Activated CD8-positive, alpha-beta memory T cell treated with anti-CD3 and anti-CD28 coated beads, Interleukin-2, amount 10 ng/mL, durations not matched to agents 7 days and 5 days (primary cell): ENCODE measurements at regions of chr2 and their contacts with region 1.

Region 1: DNA sequence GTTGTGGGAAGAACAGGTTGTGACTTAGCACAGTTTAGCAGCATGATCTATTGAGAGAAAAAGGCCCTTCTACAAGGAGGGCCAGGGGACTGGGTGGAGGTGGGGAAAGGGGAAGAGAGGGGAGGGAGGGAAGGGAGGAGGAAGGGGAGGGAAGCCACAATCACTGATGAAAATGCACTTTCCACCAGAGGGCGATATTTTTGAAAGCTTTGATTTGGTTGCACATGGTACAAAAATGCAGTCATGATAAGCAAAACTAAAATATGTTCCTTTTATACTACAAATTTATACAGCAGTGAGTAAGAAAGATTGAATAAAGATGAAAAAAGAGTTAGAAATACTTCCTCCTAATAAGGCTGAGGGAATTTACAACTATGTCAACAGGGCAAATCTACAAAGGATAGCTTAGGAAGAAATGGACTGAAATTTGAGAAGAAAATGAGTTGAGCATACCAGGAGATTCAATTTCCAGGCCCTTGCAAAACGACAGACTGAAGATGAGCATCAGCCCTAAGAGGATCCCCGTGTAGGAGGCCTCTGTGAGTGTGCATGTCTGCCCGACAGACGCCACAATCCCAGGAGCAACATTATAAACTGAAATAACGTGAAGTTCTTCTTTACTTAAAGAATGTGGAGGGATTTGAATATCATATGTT is 17.2 kb downstream of the SH3YL1 start:
- DNase-seq: no peak
- ATAC-seq: no peak
- H3K4me3 Mint-ChIP-seq: no peak overlapping the region
- H3K27ac Mint-ChIP-seq: no peak overlapping the region
- H3K4me1 Mint-ChIP-seq: no peaks in the 10 kb centered on the region
- H3K27me3 Mint-ChIP-seq: no peaks in the 10 kb centered on the region

Region 2: DNA sequence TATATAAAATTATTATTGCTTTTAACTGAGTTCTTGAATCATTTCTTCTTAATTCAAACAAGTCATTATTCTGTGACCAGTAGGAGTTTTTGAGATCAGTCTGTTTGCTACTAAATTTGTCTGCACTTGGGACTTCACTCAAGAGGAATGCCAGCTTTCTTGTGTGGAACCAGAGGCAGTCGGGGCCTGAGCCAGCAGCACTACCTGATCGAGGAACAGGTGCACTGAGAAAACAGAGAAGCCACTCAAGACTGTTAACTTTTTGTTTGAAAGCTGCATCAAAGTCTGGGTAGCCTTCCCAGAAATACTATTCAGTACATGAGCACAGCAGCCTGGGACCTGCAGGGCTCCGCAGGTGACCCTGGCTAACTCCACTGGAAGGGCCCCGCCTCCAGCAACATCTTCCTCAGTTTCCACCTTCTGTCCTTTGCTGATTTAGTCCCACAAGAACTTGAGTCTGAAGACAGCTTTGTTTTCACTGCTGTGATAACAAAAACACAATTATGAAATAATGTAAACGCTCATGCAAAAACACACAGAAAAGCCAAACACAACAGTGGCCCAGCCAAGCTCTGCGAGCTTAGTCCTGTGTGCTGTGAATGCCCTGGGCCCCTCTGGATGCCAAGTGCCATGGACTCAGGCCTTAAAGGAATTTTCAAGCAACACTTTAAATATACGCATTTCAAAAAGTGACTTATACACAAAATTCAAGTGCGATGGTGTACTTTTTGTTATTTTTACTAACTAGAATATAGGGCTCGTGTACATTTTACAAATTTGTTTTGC is 44.8 kb before region 1 on chr2:
- CTCF ChIA-PET with region 1: no interaction called
- DNase-seq: no peak
- ATAC-seq: no peak
- H3K4me3 Mint-ChIP-seq: no peak overlapping the region
- H3K27ac Mint-ChIP-seq: no peak overlapping the region
- H3K4me1 Mint-ChIP-seq: peaks cover 2% of the 10 kb centered on the region
- H3K27me3 Mint-ChIP-seq: peaks cover 15% of the 10 kb centered on the region

Region 3: GRCh38 chr2:228115-228514 is 18.5 kb before region 1 on chr2:
- CTCF ChIA-PET with region 1: no interaction called
- DNase-seq: no peak
- ATAC-seq: no peak
- H3K4me3 Mint-ChIP-seq: no peak overlapping the region
- H3K27ac Mint-ChIP-seq: no peak overlapping the region
- H3K4me1 Mint-ChIP-seq: no peaks in the 10 kb centered on the region
- H3K27me3 Mint-ChIP-seq: no peaks in the 10 kb centered on the region

Region 4: GRCh38 chr2:257429-257828 is 10.8 kb after region 1 on chr2:
- CTCF ChIA-PET with region 1: interaction called, 15 read pairs
- DNase-seq: no peak
- ATAC-seq: no peak
- H3K4me3 Mint-ChIP-seq: no peak overlapping the region
- H3K27ac Mint-ChIP-seq: no peak overlapping the region
- H3K4me1 Mint-ChIP-seq: no peaks in the 10 kb centered on the region
- H3K27me3 Mint-ChIP-seq: no peaks in the 10 kb centered on the region

Region 5: DNA sequence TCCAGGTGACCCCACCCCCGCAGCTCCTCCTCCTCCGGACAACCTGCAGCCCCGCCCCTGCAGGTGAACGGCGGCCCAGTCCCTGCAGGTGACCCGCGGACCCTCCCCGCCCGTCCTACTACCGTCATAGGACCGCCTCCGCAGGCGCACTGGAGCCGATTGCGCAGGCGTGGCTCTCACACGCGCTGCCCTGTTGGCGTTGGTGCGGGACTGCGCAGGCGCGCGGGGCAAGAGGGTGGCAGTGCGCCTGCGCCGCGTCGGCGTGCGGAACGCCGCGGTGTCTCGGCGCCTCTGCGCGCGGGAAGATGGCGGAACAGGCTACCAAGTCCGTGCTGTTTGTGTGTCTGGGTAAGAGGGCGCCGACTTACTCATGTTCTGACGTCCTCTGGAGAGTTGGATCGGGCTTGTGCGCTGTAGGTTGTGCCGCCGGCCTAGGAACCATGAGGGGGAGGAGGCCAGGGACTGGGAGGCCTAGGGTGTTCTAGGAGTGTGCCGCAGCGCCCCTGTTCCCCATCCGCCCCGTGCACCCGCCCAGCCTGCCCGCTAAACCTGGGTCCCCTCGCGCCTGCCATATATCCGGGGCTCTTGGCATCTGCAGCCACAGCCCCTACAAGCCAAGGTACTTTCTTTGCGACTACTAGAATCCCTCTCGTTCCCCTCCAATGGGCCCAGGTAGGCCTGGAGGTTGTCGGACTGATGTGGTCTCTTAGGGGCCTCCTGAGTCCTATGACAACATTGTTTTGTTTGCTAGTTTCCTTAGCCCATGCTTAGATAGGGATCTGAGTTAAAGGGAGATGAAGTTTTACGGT is 18.2 kb after region 1 on chr2 and contains the start of gene ACP1:
- CTCF ChIA-PET with region 1: interaction called, 12 read pairs
- DNase-seq: peak; percentile 95
- ATAC-seq: peak; percentile 90
- H3K4me3 Mint-ChIP-seq: peak within 1 kb of the TSS; percentile 94
- H3K27ac Mint-ChIP-seq: peak within 1 kb of the TSS; percentile 94
- H3K4me1 Mint-ChIP-seq: peaks cover 40% of the 10 kb centered on the region
- H3K27me3 Mint-ChIP-seq: no peaks in the 10 kb centered on the region
- total RNA-seq, gene ACP1: 95.2 to 113 TPM

Region 6: GRCh38 chr2:290090-290722 is 43.6 kb after region 1 on chr2:
- CTCF ChIA-PET with region 1: interaction called, 10 read pairs
- DNase-seq: peak; percentile 65
- ATAC-seq: peak; percentile 52
- H3K4me3 Mint-ChIP-seq: peak overlapping the region; percentile 27
- H3K27ac Mint-ChIP-seq: no peak overlapping the region
- H3K4me1 Mint-ChIP-seq: peaks cover 7% of the 10 kb centered on the region
- H3K27me3 Mint-ChIP-seq: peaks cover 59% of the 10 kb centered on the region

Region 7: GRCh38 chr2:383178-383577 is 136.6 kb after region 1 on chr2:
- CTCF ChIA-PET with region 1: no interaction called
- DNase-seq: no peak
- ATAC-seq: no peak
- H3K4me3 Mint-ChIP-seq: no peak overlapping the region
- H3K27ac Mint-ChIP-seq: no peak overlapping the region
- H3K4me1 Mint-ChIP-seq: no peaks in the 10 kb centered on the region
- H3K27me3 Mint-ChIP-seq: peaks cover 6% of the 10 kb centered on the region